CD8-positive, alpha-beta T cell (primary cell): ENCODE measurements at regions of chr9 and their contacts with region 1.

Region 1: GRCh38 chr9:111819360-111819759 is 24.6 kb upstream of the SHOC1 start:
- DNase-seq: no peak
- ATAC-seq: no peak
- H3K4me3 ChIP-seq: no peak overlapping the region
- H3K4me3 Mint-ChIP-seq: no peak overlapping the region
- H3K27ac ChIP-seq: no peak overlapping the region
- H3K27ac Mint-ChIP-seq: no peak overlapping the region
- H3K4me1 ChIP-seq: no peaks in the 10 kb centered on the region
- H3K4me1 Mint-ChIP-seq: no peaks in the 10 kb centered on the region
- H3K27me3 ChIP-seq: peaks cover 0 to 3% of the 10 kb centered on the region in 2 experiments
- H3K27me3 Mint-ChIP-seq: no peaks in the 10 kb centered on the region
- CTCF ChIP-seq: no peak

Region 2: GRCh38 chr9:111833941-111834340 is 14.6 kb after region 1 on chr9:
- CTCF ChIA-PET with region 1: interaction called, 8 read pairs
- POLR2A ChIA-PET with region 1: no interaction called
- intact Hi-C with region 1: loop called in 1 of 2 experiments (anchors 2 kb)
- DNase-seq: no peak
- ATAC-seq: no peak
- H3K4me3 ChIP-seq: no peak overlapping the region
- H3K4me3 Mint-ChIP-seq: no peak overlapping the region
- H3K27ac ChIP-seq: no peak overlapping the region
- H3K27ac Mint-ChIP-seq: no peak overlapping the region
- H3K4me1 ChIP-seq: no peaks in the 10 kb centered on the region
- H3K4me1 Mint-ChIP-seq: no peaks in the 10 kb centered on the region
- H3K27me3 ChIP-seq: no peaks in the 10 kb centered on the region
- H3K27me3 Mint-ChIP-seq: peaks cover 10% of the 10 kb centered on the region
- CTCF ChIP-seq: no peak